SK-N-SH (cell line): ENCODE measurements at regions of chr17 and their contacts with region 1.

Region 1: DNA sequence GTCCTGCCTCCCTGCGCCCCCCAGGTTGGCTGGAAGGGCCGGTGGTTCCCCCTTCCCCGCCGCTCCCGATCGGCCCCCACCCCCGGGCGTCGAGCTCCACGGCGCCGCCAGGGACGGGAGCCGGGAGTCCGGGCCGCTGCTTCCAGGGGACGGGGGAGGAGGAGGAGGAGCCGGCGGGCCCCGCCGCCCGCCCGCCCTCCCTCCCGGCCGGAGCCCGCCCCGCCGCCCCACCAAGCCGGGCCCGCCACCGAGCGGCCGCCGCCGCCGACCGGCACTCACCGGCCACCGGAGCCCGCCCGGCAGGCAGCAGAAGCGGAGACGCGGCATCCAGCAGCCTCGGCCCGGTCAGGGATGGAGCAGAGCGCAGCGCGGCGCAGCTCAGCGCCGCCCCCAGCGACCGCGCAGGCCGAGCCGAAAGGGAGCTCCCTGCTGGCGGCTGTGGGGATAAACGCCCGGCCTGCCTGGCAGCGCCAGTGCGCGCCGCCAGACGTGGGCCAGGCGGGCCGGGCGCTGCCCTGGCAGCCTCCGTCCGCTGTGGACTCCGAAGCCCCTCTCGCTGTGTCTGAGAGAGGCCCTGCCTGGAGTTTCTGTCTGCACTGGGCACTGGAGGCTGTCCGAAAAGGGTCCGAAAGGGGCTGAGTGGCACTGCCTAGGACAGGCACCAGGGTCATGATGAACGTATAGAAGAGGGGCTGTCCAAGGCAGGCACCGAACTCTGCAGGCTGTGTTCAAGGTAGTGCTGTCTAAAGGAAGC is at the start of gene MYO18A:
- DNase-seq: peak; percentile 96
- H3K4me3 ChIP-seq: peak within 1 kb of the TSS; percentile 59 to 64
- H3K27ac ChIP-seq: peak within 1 kb of the TSS; percentile 51 to 80
- H3K4me1 ChIP-seq: peaks cover 17 to 36% of the 10 kb centered on the region in 2 experiments; a peak in 1 of 4 replicates
- H3K27me3 ChIP-seq: no peaks in the 10 kb centered on the region
- CTCF ChIP-seq: peak; percentile 67
- EP300 ChIP-seq: no peak
- RAD21 ChIP-seq: peak; percentile 55
- polyA plus RNA-seq, gene MYO18A: 6.0 and 6.6 TPM in 2 replicates

Region 2: DNA sequence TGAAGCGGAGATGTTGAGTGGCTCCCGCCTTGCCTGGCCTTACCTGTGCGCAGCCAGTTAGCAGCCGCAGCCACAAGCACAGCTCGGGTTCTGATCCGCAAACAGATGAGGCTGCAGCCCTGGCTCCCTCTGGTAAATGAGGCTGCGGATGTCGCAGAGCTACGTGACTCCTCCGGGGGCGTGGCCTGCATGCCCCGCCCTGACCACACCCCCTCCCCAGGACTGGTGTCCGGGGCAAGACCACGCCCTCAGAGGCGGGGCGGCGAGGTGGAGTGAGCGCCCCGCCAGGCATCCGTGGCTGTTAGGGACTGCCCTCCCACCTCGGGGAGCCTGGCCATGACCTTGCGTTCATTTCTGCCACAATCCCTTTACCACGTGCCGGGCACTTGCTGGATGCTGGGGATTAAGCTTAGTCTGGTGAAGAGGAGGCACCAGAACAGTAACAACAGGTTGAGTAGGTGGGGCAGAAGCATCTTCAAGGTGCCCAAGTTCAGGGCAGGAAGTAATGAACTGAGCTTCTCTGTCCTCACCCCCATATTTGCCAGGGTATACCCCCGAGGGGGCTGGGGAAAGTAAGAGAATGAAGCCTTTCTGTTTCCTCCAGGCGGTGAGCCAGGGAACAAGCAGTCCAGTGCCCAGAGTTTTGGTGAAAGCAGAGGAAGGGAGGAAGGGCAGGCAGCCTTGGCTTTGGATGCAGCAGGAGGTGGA is 603.3 kb before region 1 on chr17 and contains the start of gene ALDOC:
- CTCF ChIA-PET with region 1: no interaction called
- POLR2A ChIA-PET with region 1: no interaction called
- DNase-seq: peak; percentile 97
- H3K4me3 ChIP-seq: peak within 1 kb of the TSS in 1 of 2 experiments; percentile 24; a peak in 1 of 4 replicates
- H3K27ac ChIP-seq: peak within 1 kb of the TSS in 1 of 2 experiments; percentile 77; a peak in 2 of 4 replicates
- H3K4me1 ChIP-seq: peaks cover 0 to 36% of the 10 kb centered on the region in 2 experiments; a peak in 3 of 4 replicates
- H3K27me3 ChIP-seq: no peaks in the 10 kb centered on the region
- CTCF ChIP-seq: no peak
- EP300 ChIP-seq: no peak
- RAD21 ChIP-seq: no peak
- polyA plus RNA-seq, gene ALDOC: 10.1 and 10.3 TPM in 2 replicates

Region 3: DNA sequence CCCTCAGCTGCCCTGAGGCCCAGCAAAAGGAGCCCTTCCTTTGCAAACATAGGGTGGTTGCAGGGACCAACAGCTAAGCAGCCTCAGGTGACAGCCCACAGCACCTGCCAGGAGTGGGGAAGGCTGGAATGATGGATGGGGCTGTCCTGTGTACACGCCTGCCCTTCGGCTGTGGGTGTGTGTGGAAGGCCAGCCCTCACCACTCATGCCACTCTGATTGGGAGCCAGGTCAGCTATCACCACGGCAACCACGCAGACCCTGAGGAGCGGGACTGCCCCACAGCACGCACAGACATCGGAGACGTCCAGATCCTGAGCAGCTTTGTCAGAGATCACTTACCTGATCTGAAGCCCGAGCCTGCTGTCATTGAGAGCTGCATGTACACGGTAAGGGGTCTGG is 125.4 kb before region 1 on chr17:
- CTCF ChIA-PET with region 1: no interaction called
- POLR2A ChIA-PET with region 1: no interaction called
- DNase-seq: peak; percentile 78
- H3K4me3 ChIP-seq: no peak overlapping the region
- H3K27ac ChIP-seq: peak overlapping the region in 1 of 2 experiments; percentile 83; a peak in 2 of 4 replicates
- H3K4me1 ChIP-seq: peaks cover 0 to 53% of the 10 kb centered on the region in 2 experiments; a peak in 3 of 4 replicates
- H3K27me3 ChIP-seq: no peaks in the 10 kb centered on the region
- CTCF ChIP-seq: no peak
- EP300 ChIP-seq: peak in 1 of 2 experiments; percentile 35; a peak in 1 of 4 replicates
- RAD21 ChIP-seq: no peak

Region 4: DNA sequence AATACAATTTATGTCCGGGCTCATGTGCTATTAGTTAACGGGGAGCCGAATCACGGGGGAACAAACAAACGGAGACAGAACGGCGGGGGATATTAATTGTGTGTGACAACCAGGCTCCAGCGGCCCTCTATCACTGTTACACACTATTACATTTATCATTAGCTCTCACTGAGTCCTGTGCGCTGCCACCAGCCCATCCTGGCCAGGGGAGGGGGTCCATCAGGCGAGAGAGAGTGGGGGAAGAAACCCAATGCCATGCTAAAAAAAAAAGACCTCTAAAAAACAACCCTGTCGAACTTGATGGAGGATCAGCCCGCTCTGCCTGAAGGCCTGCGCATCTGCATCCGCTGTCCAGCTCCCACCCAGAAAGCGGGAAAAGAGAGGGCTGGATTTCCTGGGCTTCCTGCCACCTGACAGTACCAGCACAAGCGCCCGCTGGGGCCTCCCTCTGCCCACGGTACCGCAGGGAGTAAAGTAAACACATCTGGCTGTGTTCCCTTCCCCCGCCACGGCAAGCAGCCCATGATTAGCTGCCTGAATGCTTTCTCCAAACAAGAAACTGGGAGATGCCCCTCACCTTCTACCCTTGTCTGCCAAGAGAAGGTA is 95.6 kb before region 1 on chr17:
- CTCF ChIA-PET with region 1: no interaction called
- POLR2A ChIA-PET with region 1: no interaction called
- DNase-seq: peak; percentile 90
- H3K4me3 ChIP-seq: no peak overlapping the region
- H3K27ac ChIP-seq: peak overlapping the region in 1 of 2 experiments; percentile 89; a peak in 2 of 4 replicates
- H3K4me1 ChIP-seq: peaks cover 0 to 17% of the 10 kb centered on the region in 2 experiments; a peak in 2 of 4 replicates
- H3K27me3 ChIP-seq: no peaks in the 10 kb centered on the region
- CTCF ChIP-seq: no peak
- EP300 ChIP-seq: peak in 1 of 2 experiments; percentile 51; a peak in 1 of 4 replicates
- RAD21 ChIP-seq: no peak; the same call in 1 of the 2 replicates

Region 5: GRCh38 chr17:29124117-29124924 is 55.9 kb before region 1 on chr17:
- CTCF ChIA-PET with region 1: interaction called, 44 read pairs
- POLR2A ChIA-PET with region 1: interaction called, 3 read pairs
- DNase-seq: peak; percentile 80
- H3K4me3 ChIP-seq: no peak overlapping the region; a peak in 1 of 4 replicates
- H3K27ac ChIP-seq: no peak overlapping the region
- H3K4me1 ChIP-seq: peaks cover 0 to 3% of the 10 kb centered on the region in 2 experiments; a peak in 1 of 4 replicates
- H3K27me3 ChIP-seq: no peaks in the 10 kb centered on the region
- CTCF ChIP-seq: peak; percentile 76
- EP300 ChIP-seq: no peak
- RAD21 ChIP-seq: peak; percentile 95

Region 6: DNA sequence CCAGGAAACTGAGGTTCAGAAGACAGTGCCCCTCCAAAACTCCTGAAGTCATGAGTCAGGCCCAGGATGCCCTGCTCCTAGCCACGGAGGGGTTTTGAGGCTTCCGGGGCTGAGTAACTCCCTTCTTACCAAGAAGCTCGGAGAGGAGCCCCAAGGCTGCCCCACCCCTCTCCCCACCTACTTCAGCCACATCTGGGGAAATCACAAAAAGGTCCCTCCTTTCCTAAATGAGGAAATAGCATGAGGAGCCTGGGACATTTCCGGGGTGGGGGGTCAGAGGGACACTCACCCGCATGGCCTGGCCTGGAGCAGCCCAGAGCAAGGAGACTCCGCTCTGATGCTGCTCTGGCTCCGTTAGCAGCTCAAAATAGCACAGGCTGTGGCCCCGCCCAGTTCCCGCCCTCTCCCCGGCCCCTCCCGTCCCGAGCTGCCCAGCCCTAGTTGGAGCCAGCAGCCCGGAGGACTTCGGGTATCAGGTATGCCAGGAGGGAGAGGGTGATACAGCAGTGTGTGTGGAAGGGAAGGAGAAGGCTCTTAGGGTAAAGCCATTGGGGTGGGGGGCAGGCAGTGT is 40.1 kb before region 1 on chr17:
- CTCF ChIA-PET with region 1: interaction called, 276 read pairs
- POLR2A ChIA-PET with region 1: no interaction called
- DNase-seq: peak; percentile 81
- H3K4me3 ChIP-seq: peak overlapping the region; percentile 13 to 38; a peak in 3 of 4 replicates
- H3K27ac ChIP-seq: peak overlapping the region; percentile 27 to 82; a peak in 2 of 4 replicates
- H3K4me1 ChIP-seq: peaks cover 25 to 48% of the 10 kb centered on the region in 2 experiments
- H3K27me3 ChIP-seq: no peaks in the 10 kb centered on the region
- CTCF ChIP-seq: no peak
- EP300 ChIP-seq: no peak
- RAD21 ChIP-seq: no peak

Region 7: DNA sequence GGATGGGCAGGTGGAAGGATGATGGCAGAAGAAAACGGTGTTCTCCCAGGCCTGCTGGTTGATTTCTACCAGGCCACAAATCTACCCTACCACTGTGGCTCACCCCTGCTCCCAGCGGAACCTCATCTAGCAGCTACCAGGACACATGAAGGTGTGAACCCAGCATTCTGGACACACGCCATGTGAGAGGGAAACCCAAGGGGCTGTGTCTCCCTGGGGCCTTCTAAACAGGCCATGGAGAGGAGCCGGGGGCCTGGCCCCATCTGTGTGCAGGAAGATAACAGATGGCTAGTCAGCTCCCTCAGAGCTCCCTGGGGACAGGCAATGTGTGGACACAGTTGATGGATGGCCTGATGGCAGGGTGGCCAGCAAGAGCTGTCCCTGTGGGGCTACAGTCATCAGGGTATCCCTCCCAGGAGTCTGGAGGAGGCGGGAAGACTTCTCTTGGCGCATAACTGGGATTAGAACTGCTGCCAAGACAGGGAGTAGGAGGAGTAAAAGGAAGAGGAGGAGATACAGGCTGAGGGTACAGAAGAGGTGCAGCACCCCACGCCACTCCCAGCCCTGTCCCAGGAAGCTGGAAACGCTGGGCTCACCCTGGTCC is 17.4 kb before region 1 on chr17:
- CTCF ChIA-PET with region 1: interaction called, 49 read pairs
- POLR2A ChIA-PET with region 1: interaction called, 3 read pairs
- DNase-seq: no peak
- H3K4me3 ChIP-seq: no peak overlapping the region
- H3K27ac ChIP-seq: no peak overlapping the region; a peak in 1 of 4 replicates
- H3K4me1 ChIP-seq: peaks cover 22 to 27% of the 10 kb centered on the region in 2 experiments; a peak in 2 of 4 replicates
- H3K27me3 ChIP-seq: no peaks in the 10 kb centered on the region
- CTCF ChIP-seq: no peak
- EP300 ChIP-seq: no peak
- RAD21 ChIP-seq: no peak

Region 8: GRCh38 chr17:29195465-29196081 is 15.4 kb after region 1 on chr17:
- CTCF ChIA-PET with region 1: interaction called, 55 read pairs
- POLR2A ChIA-PET with region 1: interaction called, 3 read pairs
- DNase-seq: no peak
- H3K4me3 ChIP-seq: no peak overlapping the region
- H3K27ac ChIP-seq: no peak overlapping the region
- H3K4me1 ChIP-seq: no peaks in the 10 kb centered on the region
- H3K27me3 ChIP-seq: no peaks in the 10 kb centered on the region; the same call in 1 of the 2 replicates
- CTCF ChIP-seq: no peak
- EP300 ChIP-seq: no peak
- RAD21 ChIP-seq: no peak

Region 9: GRCh38 chr17:29219378-29220047 is 39.3 kb after region 1 on chr17:
- CTCF ChIA-PET with region 1: interaction called, 56 read pairs
- POLR2A ChIA-PET with region 1: no interaction called
- DNase-seq: peak; percentile 86
- H3K4me3 ChIP-seq: peak overlapping the region in 1 of 2 experiments; percentile 17; a peak in 1 of 4 replicates
- H3K27ac ChIP-seq: no peak overlapping the region
- H3K4me1 ChIP-seq: peaks cover 0 to 6% of the 10 kb centered on the region in 2 experiments; a peak in 1 of 4 replicates
- H3K27me3 ChIP-seq: no peaks in the 10 kb centered on the region
- CTCF ChIP-seq: peak; percentile 97
- EP300 ChIP-seq: no peak; a peak in 1 of 4 replicates
- RAD21 ChIP-seq: peak; percentile 75

Region 10: GRCh38 chr17:29722411-29723198 is 542.4 kb after region 1 on chr17:
- CTCF ChIA-PET with region 1: no interaction called
- POLR2A ChIA-PET with region 1: no interaction called
- DNase-seq: peak; percentile 39
- H3K4me3 ChIP-seq: no peak overlapping the region
- H3K27ac ChIP-seq: peak overlapping the region; percentile 28 to 95; a peak in 3 of 4 replicates
- H3K4me1 ChIP-seq: peaks cover 33 to 54% of the 10 kb centered on the region in 2 experiments
- H3K27me3 ChIP-seq: no peaks in the 10 kb centered on the region
- CTCF ChIP-seq: no peak
- EP300 ChIP-seq: no peak
- RAD21 ChIP-seq: no peak